ENCODE measurements at regions of chr10 and their contacts with region 1.

Region 1: GRCh38 chr10:43105102-43105785 is 28.4 kb downstream of the RET start:
- DNase-seq: peak; percentile 60
- H3K4me3 Mint-ChIP-seq: peak overlapping the region; percentile 63
- H3K27ac Mint-ChIP-seq: no peak overlapping the region
- H3K4me1 Mint-ChIP-seq: no peaks in the 10 kb centered on the region
- H3K27me3 Mint-ChIP-seq: peaks cover 9% of the 10 kb centered on the region
- CTCF ChIP-seq: peak; percentile 100

Region 2: GRCh38 chr10:42866115-42866995 is 238.9 kb before region 1 on chr10:
- CTCF ChIA-PET with region 1: interaction called, 32 read pairs
- POLR2A ChIA-PET with region 1: no interaction called
- intact Hi-C with region 1: loop called (anchors 1 kb)
- DNase-seq: peak; percentile 35
- H3K4me3 Mint-ChIP-seq: no peak overlapping the region
- H3K27ac Mint-ChIP-seq: no peak overlapping the region
- H3K4me1 Mint-ChIP-seq: no peaks in the 10 kb centered on the region
- H3K27me3 Mint-ChIP-seq: no peaks in the 10 kb centered on the region
- CTCF ChIP-seq: peak; percentile 73

Region 3: GRCh38 chr10:43093423-43094076 is 11.7 kb before region 1 on chr10:
- CTCF ChIA-PET with region 1: interaction called, 14 read pairs
- POLR2A ChIA-PET with region 1: no interaction called
- intact Hi-C with region 1: no loop called
- DNase-seq: no peak
- H3K4me3 Mint-ChIP-seq: no peak overlapping the region
- H3K27ac Mint-ChIP-seq: no peak overlapping the region
- H3K4me1 Mint-ChIP-seq: no peaks in the 10 kb centered on the region
- H3K27me3 Mint-ChIP-seq: no peaks in the 10 kb centered on the region
- CTCF ChIP-seq: no peak

Region 4: DNA sequence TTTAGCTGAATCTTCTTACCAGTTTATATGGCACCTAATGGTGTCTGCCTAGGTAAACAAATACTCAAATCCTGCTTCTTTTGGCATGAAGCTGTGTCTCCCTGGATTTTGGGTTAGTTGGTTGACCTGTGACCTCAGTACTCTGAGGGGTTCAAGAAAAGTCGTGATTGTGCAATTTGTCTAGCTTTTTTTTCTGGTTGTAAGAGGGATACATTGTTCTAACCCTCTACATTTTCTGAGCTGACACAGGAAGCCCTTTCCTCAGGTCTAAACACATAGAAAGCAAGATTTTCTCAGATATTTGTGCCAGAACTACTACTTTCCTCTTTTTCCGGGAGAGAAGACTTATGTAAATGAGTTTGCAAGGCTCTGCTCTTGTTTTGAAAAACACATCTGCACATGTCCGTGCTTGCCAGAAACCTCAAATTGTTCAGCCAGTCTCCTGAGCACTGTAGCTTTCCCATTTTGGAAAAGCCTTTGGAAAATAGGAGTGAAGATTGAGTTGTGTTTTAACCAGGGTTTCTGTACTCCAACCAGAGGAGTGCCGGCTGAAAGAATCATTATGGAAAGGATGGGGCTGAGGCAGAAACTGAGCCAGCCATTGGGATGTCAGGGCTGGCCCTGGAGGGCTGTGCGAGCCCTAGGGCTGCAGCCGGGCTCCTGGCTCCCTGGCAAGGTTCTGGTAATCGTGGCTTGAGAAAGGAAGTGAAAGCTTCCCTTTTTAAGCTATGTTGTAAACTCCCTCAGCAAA is 1311.0 kb after region 1 on chr10:
- CTCF ChIA-PET with region 1: no interaction called
- POLR2A ChIA-PET with region 1: no interaction called
- intact Hi-C with region 1: no loop called
- DNase-seq: no peak
- H3K4me3 Mint-ChIP-seq: peak overlapping the region; percentile 48
- H3K27ac Mint-ChIP-seq: peak overlapping the region; percentile 40
- H3K4me1 Mint-ChIP-seq: no peaks in the 10 kb centered on the region
- H3K27me3 Mint-ChIP-seq: no peaks in the 10 kb centered on the region
- CTCF ChIP-seq: no peak

Measured in MCF 10A (cell line).